ENCODE measurements at regions of chr3 and their contacts with region 1.

Region 1: DNA sequence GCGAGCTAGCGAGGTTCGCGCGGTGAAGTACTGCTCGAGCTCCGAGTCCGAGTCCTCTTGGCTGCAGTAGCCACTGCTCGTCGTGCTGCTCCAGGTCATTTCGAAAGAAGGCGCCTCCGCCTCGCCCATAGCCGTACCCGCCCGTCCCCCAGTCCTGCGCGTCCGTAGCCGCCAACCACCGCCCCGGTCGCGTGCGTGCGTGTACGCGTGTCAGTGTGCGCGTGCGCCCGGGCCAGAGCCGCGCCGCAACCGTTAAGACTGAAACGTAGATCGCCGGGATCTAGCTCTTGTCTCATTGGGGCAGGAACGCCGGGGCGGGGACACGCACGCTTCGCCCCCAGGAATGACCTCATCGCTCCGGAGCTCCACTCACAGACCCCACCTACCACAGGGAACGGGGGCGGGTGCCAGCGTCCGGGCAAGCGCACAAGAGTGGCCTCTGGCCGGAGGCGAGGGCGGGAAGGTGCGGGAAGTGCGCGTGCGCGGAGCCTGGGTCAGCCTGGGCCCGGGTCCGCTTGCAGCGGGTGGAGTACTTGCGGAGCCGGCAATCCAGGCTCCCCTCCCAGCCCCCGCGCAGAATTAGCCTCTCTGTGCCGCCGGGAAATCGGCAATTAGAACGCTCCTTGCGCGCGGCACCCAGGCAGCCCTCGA is 3.3 kb downstream of the RASSF1 start:
- DNase-seq: peak; percentile 74 to 98 (median 93)
- ATAC-seq: peak; percentile 81
- H3K4me3 ChIP-seq: peak overlapping the region; percentile 88 to 98
- H3K4me3 Mint-ChIP-seq: peak overlapping the region; percentile 98
- H3K27ac ChIP-seq: peak overlapping the region; percentile 91 to 93
- H3K27ac Mint-ChIP-seq: peak overlapping the region; percentile 96
- H3K4me1 ChIP-seq: peaks cover 77% of the 10 kb centered on the region
- H3K4me1 Mint-ChIP-seq: peaks cover 74% of the 10 kb centered on the region
- H3K27me3 ChIP-seq: no peaks in the 10 kb centered on the region
- H3K27me3 Mint-ChIP-seq: no peaks in the 10 kb centered on the region
- CTCF ChIP-seq: no peak

Region 2: DNA sequence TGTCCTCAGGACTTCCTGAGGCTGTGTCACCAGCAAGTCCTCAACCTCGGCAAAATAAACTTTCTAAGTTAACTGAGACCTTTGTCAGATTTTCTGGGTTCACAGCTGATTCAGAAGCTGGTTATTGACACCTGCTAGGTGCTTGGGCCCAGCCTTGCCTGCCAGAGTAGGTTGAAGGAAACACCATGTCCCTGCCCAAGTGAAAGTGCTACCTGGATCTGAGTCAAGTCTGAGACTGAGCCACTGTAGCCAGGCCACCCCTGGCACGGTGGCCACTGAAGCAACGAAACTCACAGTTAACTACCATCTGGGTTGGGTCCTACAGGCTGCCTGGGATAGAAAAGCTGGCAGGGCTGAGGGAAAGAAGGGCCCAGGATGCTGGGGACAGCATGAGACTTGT is 23.0 kb before region 1 on chr3:
- CTCF ChIA-PET with region 1: interaction called, 3 read pairs
- POLR2A ChIA-PET with region 1: interaction called, 10 read pairs
- intact Hi-C with region 1: no loop called
- DNase-seq: peak in 1 of 9 experiments; percentile 1
- ATAC-seq: no peak
- H3K4me3 ChIP-seq: no peak overlapping the region
- H3K4me3 Mint-ChIP-seq: no peak overlapping the region
- H3K27ac ChIP-seq: peak overlapping the region in 1 of 2 experiments; percentile 8
- H3K27ac Mint-ChIP-seq: no peak overlapping the region
- H3K4me1 ChIP-seq: peaks cover 15% of the 10 kb centered on the region
- H3K4me1 Mint-ChIP-seq: peaks cover 28% of the 10 kb centered on the region
- H3K27me3 ChIP-seq: no peaks in the 10 kb centered on the region
- H3K27me3 Mint-ChIP-seq: no peaks in the 10 kb centered on the region
- CTCF ChIP-seq: no peak

Region 3: DNA sequence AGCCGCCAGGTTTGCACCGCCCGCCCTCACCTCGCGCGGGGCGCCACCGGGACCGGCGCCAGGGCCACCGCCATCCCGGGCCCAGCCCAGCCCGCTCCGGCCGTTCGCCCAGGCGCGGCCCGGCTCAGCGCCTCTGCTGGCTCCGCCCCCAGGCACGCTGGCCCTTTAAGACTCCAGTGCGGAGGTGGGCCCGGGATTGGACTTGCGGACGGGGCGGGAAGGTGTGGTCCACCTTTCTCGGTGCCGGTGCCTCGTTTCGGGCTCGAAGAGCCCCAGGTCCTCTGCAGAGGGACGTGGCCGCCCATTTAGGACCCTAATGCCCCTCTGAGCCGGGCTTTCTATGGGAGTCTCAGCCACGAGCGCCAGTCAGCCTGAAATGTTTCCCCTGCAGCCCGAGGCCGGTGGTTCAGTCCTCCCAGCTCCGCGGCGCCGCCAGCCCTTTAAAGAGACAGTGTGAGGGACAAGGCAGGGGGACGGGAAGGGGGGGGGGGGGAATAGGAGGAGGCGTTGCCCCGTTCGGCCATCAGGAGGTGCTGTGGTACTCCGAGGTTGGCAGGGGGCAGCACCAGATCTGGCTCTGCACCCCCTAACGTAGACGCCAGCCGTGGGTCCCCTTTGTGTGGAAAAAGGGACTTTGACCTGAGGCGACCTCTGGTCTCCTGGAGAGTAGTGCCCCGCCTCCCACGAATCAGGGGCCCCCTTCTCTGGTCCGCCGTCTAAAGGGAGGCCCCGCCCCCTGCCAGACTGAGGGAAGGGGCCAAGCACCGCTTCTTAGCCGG is 15.8 kb before region 1 on chr3:
- CTCF ChIA-PET with region 1: interaction called, 31 read pairs
- POLR2A ChIA-PET with region 1: interaction called, 44 read pairs
- intact Hi-C with region 1: loop called in 1 of 2 experiments (anchors 2 kb)
- DNase-seq: peak; percentile 65 to 89 (median 82)
- ATAC-seq: peak; percentile 69
- H3K4me3 ChIP-seq: peak overlapping the region; percentile 71 to 96
- H3K4me3 Mint-ChIP-seq: peak overlapping the region; percentile 85
- H3K27ac ChIP-seq: peak overlapping the region; percentile 77 to 94
- H3K27ac Mint-ChIP-seq: peak overlapping the region; percentile 92
- H3K4me1 ChIP-seq: peaks cover 30% of the 10 kb centered on the region
- H3K4me1 Mint-ChIP-seq: peaks cover 41% of the 10 kb centered on the region
- H3K27me3 ChIP-seq: no peaks in the 10 kb centered on the region
- H3K27me3 Mint-ChIP-seq: no peaks in the 10 kb centered on the region
- CTCF ChIP-seq: peak; percentile 47

Region 4: DNA sequence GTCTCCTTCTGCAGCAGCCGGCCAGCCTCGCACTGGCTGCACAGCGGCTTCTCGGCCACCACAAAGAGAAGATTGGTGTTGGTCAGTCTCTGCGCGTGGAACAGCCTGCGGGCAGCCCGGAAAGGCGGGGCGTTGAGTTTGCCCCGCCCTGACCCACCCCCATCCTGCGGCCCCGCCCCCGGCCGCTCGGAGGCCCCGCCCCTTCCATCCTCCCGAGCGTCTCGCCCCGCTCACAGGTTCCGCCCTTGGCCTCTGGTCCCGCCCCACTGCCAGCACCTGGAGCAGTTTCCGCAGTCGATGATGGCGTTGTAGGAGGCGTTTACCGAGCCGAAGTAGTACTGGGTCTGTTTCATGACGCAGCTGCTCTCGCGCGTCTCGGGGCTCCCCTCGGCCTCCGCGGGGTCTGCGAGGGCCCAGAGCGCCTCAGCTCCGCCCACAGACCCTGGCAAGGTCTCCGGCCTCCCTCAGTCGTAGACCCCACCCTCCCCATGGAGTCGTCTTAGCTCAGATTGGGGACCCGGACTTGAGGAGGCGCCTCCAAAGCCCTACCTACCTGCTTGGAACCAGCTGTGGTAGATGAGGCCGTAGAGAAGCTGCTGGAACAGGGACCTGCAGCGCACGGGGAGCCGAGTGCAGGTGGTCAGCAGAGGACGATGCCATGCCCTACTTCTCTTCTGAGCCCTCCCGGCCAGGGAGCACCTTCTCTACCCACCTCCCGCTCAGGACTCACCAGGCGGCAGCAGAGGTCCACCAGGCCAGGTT is 27.9 kb after region 1 on chr3:
- CTCF ChIA-PET with region 1: no interaction called
- POLR2A ChIA-PET with region 1: interaction called, 16 read pairs
- intact Hi-C with region 1: no loop called
- DNase-seq: peak; percentile 89 to 98 (median 94)
- ATAC-seq: peak; percentile 95
- H3K4me3 ChIP-seq: peak overlapping the region; percentile 68 to 81
- H3K4me3 Mint-ChIP-seq: peak overlapping the region; percentile 87
- H3K27ac ChIP-seq: peak overlapping the region; percentile 91 to 92
- H3K27ac Mint-ChIP-seq: peak overlapping the region; percentile 95
- H3K4me1 ChIP-seq: peaks cover 20% of the 10 kb centered on the region
- H3K4me1 Mint-ChIP-seq: peaks cover 35% of the 10 kb centered on the region
- H3K27me3 ChIP-seq: no peaks in the 10 kb centered on the region
- H3K27me3 Mint-ChIP-seq: no peaks in the 10 kb centered on the region
- CTCF ChIP-seq: no peak

Region 5: GRCh38 chr3:50491023-50491422 is 153.7 kb after region 1 on chr3:
- CTCF ChIA-PET with region 1: no interaction called
- POLR2A ChIA-PET with region 1: no interaction called
- intact Hi-C with region 1: no loop called
- DNase-seq: no peak
- ATAC-seq: no peak
- H3K4me3 ChIP-seq: no peak overlapping the region
- H3K4me3 Mint-ChIP-seq: no peak overlapping the region
- H3K27ac ChIP-seq: no peak overlapping the region
- H3K27ac Mint-ChIP-seq: no peak overlapping the region
- H3K4me1 ChIP-seq: no peaks in the 10 kb centered on the region
- H3K4me1 Mint-ChIP-seq: peaks cover 12% of the 10 kb centered on the region
- H3K27me3 ChIP-seq: no peaks in the 10 kb centered on the region
- H3K27me3 Mint-ChIP-seq: no peaks in the 10 kb centered on the region
- CTCF ChIP-seq: no peak